Right cardiac atrium (tissue), 5 donors: ENCODE measurements at regions of chr5 and their contacts with region 1.

Region 1: DNA sequence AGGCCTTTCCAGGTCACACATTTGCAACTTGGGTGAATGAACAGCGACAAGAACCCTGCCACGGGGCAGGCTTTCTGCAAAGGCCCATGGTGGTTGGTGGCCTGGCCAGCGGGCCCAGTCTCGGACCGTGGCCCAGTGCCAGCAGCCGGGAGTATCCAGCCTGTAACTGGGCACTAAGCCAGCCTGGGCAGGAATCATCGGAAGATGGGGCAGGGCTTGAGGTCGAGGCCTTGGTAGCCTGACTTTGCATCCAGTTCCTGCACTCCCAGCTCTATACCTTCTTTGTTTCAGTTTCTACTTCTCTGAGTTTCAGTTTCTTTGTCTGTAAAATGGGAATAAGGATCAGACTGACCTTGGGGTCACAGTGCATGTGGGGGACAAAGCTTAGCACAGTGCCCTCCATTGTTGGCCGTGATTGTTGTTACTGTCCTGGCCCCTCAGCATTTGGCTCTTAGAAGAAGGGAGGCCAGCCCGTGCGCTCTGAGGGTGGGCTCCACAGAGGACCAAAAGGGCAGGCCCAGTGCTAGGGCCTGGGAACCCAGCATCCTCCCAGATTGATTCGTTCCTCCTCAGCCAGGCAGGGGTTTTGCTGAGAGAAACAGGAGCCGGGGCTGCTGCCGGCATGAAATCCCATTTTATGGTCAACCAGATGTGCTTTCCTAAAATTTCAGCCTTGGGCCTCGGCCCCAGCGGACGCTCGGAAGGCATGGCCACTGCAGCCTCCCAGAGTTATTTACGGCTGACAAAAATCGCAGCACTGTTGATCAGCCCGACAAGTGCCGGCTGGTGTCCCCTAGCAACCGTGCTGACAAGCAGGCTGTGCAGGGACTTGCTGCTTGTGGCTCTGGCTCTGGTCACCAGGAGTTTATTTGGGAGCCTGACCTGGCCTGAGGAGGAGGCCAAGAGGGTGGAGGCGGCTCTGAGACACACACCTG is 43.6 kb downstream of the JADE2 start:
- DNase-seq: peak; percentile 92 to 95 (median 94)
- ATAC-seq: peak; percentile 65
- H3K4me3 ChIP-seq: no peak overlapping the region
- H3K27ac ChIP-seq: peak overlapping the region; percentile 82
- H3K4me1 ChIP-seq: peaks cover 24% of the 10 kb centered on the region
- H3K27me3 ChIP-seq: no peaks in the 10 kb centered on the region

Region 2: GRCh38 chr5:134533115-134533815 is 35.8 kb before region 1 on chr5:
- intact Hi-C with region 1: loop called in 1 of 4 experiments (anchors 5 kb)
- DNase-seq: peak; percentile 89 to 95 (median 90)
- ATAC-seq: peak; percentile 84 to 86
- H3K4me3 ChIP-seq: no peak overlapping the region
- H3K27ac ChIP-seq: no peak overlapping the region
- H3K4me1 ChIP-seq: peaks cover 42% of the 10 kb centered on the region
- H3K27me3 ChIP-seq: no peaks in the 10 kb centered on the region

Region 3: GRCh38 chr5:134864707-134865106 is 295.7 kb after region 1 on chr5:
- intact Hi-C with region 1: no loop called
- DNase-seq: no peak
- ATAC-seq: no peak
- H3K4me3 ChIP-seq: no peak overlapping the region
- H3K27ac ChIP-seq: no peak overlapping the region
- H3K4me1 ChIP-seq: no peaks in the 10 kb centered on the region
- H3K27me3 ChIP-seq: no peaks in the 10 kb centered on the region

Region 4: GRCh38 chr5:134964359-134965270 is 395.6 kb after region 1 on chr5:
- intact Hi-C with region 1: no loop called
- DNase-seq: no peak
- ATAC-seq: no peak
- H3K4me3 ChIP-seq: no peak overlapping the region
- H3K27ac ChIP-seq: no peak overlapping the region
- H3K4me1 ChIP-seq: no peaks in the 10 kb centered on the region
- H3K27me3 ChIP-seq: no peaks in the 10 kb centered on the region